Naive thymus-derived CD8-positive, alpha-beta T cell (primary cell): ENCODE measurements at regions of chr17 and their contacts with region 1.

Region 1: GRCh38 chr17:8118769-8119580 is 661 bp upstream of the ALOXE3 start:
- DNase-seq: peak; percentile 78 to 98 (median 85)
- ATAC-seq: peak; percentile 64 to 71
- H3K4me3 Mint-ChIP-seq: peak overlapping the region; percentile 92 to 98 (median 94)
- H3K27ac Mint-ChIP-seq: peak overlapping the region; percentile 91 to 100 (median 97)
- H3K4me1 Mint-ChIP-seq: peaks cover 46 to 61% (median 56%) of the 10 kb centered on the region in 4 donors
- H3K27me3 Mint-ChIP-seq: peaks cover 15 to 55% (median 38%) of the 10 kb centered on the region in 5 donors

Region 2: GRCh38 chr17:8005960-8006730 is 112.8 kb before region 1 on chr17:
- POLR2A ChIA-PET with region 1: no interaction called
- DNase-seq: peak in 1 of 10 donors; percentile 14
- ATAC-seq: peak in 1 of 2 donors; percentile 29
- H3K4me3 Mint-ChIP-seq: no peak overlapping the region
- H3K27ac Mint-ChIP-seq: no peak overlapping the region
- H3K4me1 Mint-ChIP-seq: peaks cover 5 to 10% (median 8%) of the 10 kb centered on the region in 4 donors
- H3K27me3 Mint-ChIP-seq: peaks cover 16 to 35% (median 28%) of the 10 kb centered on the region in 5 donors

Region 3: DNA sequence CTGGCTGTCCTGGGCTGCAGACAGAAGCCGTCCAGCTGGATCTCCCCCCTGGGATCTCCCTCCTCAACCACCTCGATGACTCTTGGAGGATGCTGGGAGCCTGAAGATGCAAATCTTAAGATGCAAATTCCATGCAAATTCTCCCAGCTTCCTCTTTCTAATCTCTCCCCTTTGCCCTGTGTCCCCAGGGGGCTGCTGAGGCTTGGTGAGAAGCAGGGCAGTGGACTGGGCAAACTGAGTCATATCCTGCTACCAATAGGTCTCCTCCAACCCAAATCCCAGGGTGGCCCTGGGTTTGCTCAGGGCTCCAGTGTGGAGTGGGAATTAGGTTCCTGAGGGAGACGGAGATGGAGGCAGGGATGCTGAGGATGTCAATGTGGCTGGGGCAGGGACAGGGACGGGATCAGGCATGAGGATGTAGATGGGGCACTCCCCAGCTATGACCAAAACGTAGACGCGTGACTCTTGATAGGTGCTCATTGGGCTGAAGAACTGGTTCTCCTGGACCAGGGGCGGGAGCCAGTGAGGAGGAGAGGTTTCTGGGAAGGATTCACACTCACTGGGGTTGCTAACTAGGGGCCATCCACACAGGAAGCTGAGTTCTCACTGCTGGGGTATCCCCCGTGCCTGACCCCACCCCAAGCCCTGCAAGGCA is 27.8 kb before region 1 on chr17:
- POLR2A ChIA-PET with region 1: interaction called, 15 read pairs
- DNase-seq: no peak
- ATAC-seq: no peak
- H3K4me3 Mint-ChIP-seq: peak overlapping the region in 1 of 10 donors; percentile 47
- H3K27ac Mint-ChIP-seq: peak overlapping the region in 2 of 10 donors; percentile 21 to 24
- H3K4me1 Mint-ChIP-seq: peaks cover 6 to 19% (median 12%) of the 10 kb centered on the region in 4 donors
- H3K27me3 Mint-ChIP-seq: peaks cover 16 to 46% (median 21%) of the 10 kb centered on the region in 5 donors

Region 4: DNA sequence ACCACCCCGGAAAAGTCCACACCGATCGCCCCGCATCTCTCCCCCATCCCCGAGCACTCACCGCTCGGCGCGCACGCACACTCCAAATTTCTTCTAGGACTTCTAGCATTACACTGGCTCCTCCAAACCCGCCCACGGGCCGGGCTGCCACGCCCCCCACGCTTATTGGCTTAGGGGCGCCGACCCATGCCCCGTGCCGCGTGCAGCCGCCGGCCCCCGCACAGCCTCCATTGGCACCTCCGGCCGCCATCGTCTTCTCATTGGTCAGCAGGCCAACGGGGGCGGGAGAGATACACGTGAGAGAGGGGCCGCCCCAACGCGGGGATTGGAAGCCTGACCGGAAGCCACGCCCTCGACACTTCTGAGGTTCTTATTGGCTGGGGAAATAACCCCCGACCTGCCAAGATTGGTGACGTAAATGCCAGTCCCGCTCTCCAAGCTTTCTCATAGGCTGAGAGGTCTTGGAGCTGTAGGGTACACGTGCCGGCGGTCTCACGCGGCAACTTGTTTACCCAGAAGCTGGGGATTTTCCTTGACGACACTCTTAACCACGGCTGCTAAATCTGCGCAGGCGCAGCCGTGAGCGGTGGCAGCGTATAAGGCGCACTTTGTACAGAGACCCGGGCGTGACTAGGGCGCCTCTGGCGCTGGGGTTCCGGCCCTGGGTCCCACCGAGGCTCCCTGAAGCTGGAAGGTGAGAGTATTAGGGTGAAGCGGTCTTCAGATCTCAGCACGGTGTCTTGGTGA is 37.4 kb after region 1 on chr17:
- POLR2A ChIA-PET with region 1: interaction called, 34 read pairs
- DNase-seq: peak; percentile 97 to 100 (median 100)
- ATAC-seq: peak; percentile 67 to 71
- H3K4me3 Mint-ChIP-seq: no peak overlapping the region
- H3K27ac Mint-ChIP-seq: no peak overlapping the region
- H3K4me1 Mint-ChIP-seq: peaks cover 31 to 70% (median 54%) of the 10 kb centered on the region in 4 donors
- H3K27me3 Mint-ChIP-seq: peaks cover 0 to 2% (median 0%) of the 10 kb centered on the region in 5 donors

Region 5: GRCh38 chr17:8162233-8162996 is 43.4 kb after region 1 on chr17 and contains the start of gene VAMP2:
- POLR2A ChIA-PET with region 1: interaction called, 34 read pairs
- DNase-seq: peak; percentile 75 to 92 (median 87)
- ATAC-seq: peak; percentile 61 to 66
- H3K4me3 Mint-ChIP-seq: peak within 1 kb of the TSS; percentile 86 to 96 (median 90)
- H3K27ac Mint-ChIP-seq: peak within 1 kb of the TSS; percentile 95 to 99 (median 98)
- H3K4me1 Mint-ChIP-seq: peaks cover 31 to 65% (median 64%) of the 10 kb centered on the region in 4 donors
- H3K27me3 Mint-ChIP-seq: no peaks in the 10 kb centered on the region
- polyA plus RNA-seq, gene VAMP2: 50.4 to 84.2 (median 64.4) TPM

Region 6: DNA sequence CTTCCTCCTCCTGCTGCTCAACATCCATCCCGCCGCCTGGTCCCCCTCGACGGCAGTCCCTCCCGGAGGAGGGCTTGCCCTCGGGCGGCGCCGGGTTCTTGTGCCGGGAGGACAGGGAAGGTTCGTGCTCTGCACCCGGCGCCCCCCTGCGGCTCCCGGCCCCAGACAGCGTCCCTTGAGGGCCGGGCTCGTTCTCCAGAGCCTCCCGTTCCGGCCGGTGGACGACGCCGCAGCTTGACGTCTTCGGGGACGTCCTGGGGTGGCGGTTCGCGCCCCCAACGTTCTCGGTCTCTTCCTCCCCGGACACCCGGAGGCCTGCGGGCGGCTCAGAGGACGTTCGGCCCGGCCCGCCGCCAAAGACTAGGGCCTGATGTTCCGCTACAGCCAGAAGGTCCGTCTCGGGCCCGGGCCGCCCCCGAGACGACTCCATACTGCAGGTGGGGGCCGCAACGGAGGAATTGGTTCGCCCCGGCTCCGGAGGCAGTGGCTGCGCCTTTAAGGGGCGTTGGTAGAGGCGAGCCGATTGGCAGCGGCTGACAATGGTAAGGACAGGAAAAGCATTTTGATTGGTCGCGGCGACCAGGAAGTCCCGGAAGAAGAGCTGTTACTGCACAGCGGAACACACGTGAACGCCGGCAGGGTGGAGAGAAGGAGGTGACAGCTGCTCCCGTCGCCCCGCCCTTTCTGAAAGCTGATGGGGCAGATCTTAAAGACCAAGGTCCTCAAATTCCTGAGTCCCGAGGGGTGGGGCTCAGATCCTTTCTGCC is 70.9 kb after region 1 on chr17 and contains the start of gene BORCS6:
- POLR2A ChIA-PET with region 1: interaction called, 64 read pairs
- DNase-seq: peak; percentile 83 to 98 (median 94)
- ATAC-seq: peak; percentile 67 to 71
- H3K4me3 Mint-ChIP-seq: peak within 1 kb of the TSS in 3 of 10 donors; percentile 3 to 51 (median 39)
- H3K27ac Mint-ChIP-seq: peak within 1 kb of the TSS in 8 of 10 donors; percentile 69 to 94 (median 92)
- H3K4me1 Mint-ChIP-seq: peaks cover 6 to 13% (median 12%) of the 10 kb centered on the region in 4 donors
- H3K27me3 Mint-ChIP-seq: no peaks in the 10 kb centered on the region
- polyA plus RNA-seq, gene BORCS6: 16.1 to 22.6 (median 16.9) TPM

Region 7: GRCh38 chr17:8294814-8295316 is 175.9 kb after region 1 on chr17:
- POLR2A ChIA-PET with region 1: interaction called, 11 read pairs
- DNase-seq: no peak
- ATAC-seq: no peak
- H3K4me3 Mint-ChIP-seq: peak overlapping the region; percentile 88 to 97 (median 94)
- H3K27ac Mint-ChIP-seq: peak overlapping the region; percentile 84 to 97 (median 95)
- H3K4me1 Mint-ChIP-seq: peaks cover 20 to 39% (median 31%) of the 10 kb centered on the region in 4 donors
- H3K27me3 Mint-ChIP-seq: no peaks in the 10 kb centered on the region